Endothelial cell of umbilical vein (primary cell): ENCODE measurements at regions of chr17 and their contacts with region 1.

Region 1: DNA sequence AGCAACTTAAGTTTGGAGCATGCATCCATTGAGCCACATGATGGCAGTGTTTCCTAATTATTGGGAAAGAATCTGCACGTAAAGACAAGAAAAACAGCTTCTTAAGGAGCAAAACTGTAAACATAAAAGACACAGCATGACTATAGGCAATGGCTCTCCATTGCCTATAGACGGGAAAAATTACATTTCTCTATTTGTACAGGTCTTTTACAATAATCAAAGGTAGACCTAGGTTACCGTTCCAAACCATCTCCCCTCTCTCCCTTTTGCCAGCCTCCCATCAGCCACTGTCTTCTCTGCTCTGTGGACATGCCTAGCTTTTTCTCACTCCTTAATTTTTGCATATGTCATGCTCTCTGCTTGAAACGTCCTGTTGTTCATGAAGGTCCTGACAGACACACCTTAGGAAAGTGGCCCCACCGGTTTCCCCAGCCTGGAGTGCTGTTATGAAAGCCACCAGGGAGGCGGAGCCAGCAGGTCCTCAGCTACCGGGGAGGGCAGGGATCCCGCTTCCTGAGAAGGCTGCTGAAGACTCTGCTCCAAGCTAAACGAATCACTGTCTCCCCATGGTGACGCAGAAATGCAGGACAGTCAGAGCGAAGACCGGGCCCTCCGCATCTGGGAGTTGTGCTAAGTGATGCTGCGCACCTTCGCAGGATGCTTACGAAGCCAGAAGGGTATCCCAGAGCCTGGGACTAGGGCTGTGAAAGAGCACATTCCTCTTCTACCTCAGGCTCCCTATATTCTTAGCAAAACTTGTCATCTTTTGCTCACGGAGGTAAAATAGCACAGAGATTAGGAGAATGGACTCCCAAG is 2.2 kb upstream of the SLC16A11 start:
- DNase-seq: peak; percentile 89
- H3K4me3 ChIP-seq: no peak overlapping the region
- H3K27ac ChIP-seq: no peak overlapping the region
- H3K4me1 ChIP-seq: peaks cover 27% of the 10 kb centered on the region
- H3K27me3 ChIP-seq: no peaks in the 10 kb centered on the region
- CTCF ChIP-seq: peak; percentile 52 to 58
- POLR2A ChIP-seq: no peak

Region 2: DNA sequence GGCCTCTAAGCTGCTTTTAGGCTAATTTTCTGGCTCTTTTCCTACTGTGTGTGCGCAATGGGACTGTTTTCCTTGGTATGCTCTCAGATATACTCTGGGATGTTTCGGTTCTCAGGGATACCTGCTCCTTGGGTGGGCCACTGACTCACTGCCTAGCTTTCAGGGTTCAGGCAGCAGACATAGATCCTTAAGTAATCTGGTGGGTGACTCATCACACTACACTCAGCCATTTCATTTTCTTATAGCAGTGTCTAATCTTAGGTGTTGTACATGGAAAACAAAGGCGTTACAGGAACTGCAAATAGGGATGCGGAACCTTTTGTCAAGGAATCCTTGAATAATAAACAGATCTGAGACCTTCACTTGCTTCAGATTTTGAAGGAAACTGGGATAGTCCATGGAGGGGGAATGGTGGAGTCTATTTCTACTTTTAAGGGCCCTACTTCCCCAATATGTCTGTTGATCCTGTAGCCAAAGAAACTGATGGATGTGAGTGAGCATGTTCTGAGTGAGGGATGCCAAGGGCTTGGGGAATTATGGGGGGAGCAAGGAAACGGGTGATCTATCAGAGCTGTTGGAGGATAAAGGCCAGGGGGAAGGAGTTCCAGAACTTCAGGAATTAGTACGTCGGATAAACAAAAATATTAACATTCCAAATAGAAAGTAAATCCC is 173.8 kb before region 1 on chr17:
- CTCF ChIA-PET with region 1: no interaction called
- POLR2A ChIA-PET with region 1: no interaction called
- dilution Hi-C with region 1: no loop called
- intact Hi-C with region 1: no loop called
- DNase-seq: no peak
- H3K4me3 ChIP-seq: no peak overlapping the region
- H3K27ac ChIP-seq: no peak overlapping the region
- H3K4me1 ChIP-seq: no peaks in the 10 kb centered on the region
- H3K27me3 ChIP-seq: peaks cover 6 to 9% of the 10 kb centered on the region in 2 experiments
- CTCF ChIP-seq: no peak
- POLR2A ChIP-seq: no peak

Region 3: GRCh38 chr17:6936370-6937028 is 109.6 kb before region 1 on chr17:
- CTCF ChIA-PET with region 1: no interaction called
- POLR2A ChIA-PET with region 1: no interaction called
- dilution Hi-C with region 1: no loop called
- intact Hi-C with region 1: no loop called
- DNase-seq: peak; percentile 38
- H3K4me3 ChIP-seq: peak overlapping the region; percentile 19 to 50 (median 39)
- H3K27ac ChIP-seq: no peak overlapping the region
- H3K4me1 ChIP-seq: no peaks in the 10 kb centered on the region
- H3K27me3 ChIP-seq: peaks cover 3 to 8% of the 10 kb centered on the region in 2 experiments
- CTCF ChIP-seq: no peak
- POLR2A ChIP-seq: no peak

Region 4: GRCh38 chr17:6953689-6954088 is 92.4 kb before region 1 on chr17:
- CTCF ChIA-PET with region 1: no interaction called
- POLR2A ChIA-PET with region 1: no interaction called
- dilution Hi-C with region 1: no loop called
- intact Hi-C with region 1: no loop called
- DNase-seq: no peak
- H3K4me3 ChIP-seq: no peak overlapping the region
- H3K27ac ChIP-seq: no peak overlapping the region
- H3K4me1 ChIP-seq: no peaks in the 10 kb centered on the region
- H3K27me3 ChIP-seq: peaks cover 5 to 9% of the 10 kb centered on the region in 2 experiments
- CTCF ChIP-seq: no peak
- POLR2A ChIP-seq: no peak

Region 5: DNA sequence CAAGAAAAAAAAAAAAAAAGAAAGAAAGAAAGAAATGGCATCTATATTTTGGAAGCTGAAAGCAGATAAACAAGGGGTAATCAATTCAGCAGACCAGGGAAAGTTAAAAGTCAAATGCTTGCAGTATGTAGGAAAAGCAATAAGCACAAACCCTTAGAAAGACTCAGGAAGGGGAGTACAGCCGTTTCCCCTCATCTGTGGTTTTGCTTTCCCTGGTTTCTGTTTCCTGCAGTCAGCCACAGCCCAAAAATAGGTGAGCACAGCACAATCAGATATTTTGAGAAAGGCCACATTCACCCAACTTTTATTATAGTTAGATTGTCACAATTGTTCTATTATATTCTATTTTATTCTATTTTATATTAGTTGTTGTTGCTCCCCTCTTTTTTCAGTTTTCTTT is 64.7 kb before region 1 on chr17:
- CTCF ChIA-PET with region 1: no interaction called
- POLR2A ChIA-PET with region 1: no interaction called
- dilution Hi-C with region 1: no loop called
- intact Hi-C with region 1: no loop called
- DNase-seq: no peak
- H3K4me3 ChIP-seq: no peak overlapping the region
- H3K27ac ChIP-seq: no peak overlapping the region
- H3K4me1 ChIP-seq: no peaks in the 10 kb centered on the region
- H3K27me3 ChIP-seq: peaks cover 0 to 5% of the 10 kb centered on the region in 2 experiments
- CTCF ChIP-seq: no peak
- POLR2A ChIP-seq: no peak

Region 6: DNA sequence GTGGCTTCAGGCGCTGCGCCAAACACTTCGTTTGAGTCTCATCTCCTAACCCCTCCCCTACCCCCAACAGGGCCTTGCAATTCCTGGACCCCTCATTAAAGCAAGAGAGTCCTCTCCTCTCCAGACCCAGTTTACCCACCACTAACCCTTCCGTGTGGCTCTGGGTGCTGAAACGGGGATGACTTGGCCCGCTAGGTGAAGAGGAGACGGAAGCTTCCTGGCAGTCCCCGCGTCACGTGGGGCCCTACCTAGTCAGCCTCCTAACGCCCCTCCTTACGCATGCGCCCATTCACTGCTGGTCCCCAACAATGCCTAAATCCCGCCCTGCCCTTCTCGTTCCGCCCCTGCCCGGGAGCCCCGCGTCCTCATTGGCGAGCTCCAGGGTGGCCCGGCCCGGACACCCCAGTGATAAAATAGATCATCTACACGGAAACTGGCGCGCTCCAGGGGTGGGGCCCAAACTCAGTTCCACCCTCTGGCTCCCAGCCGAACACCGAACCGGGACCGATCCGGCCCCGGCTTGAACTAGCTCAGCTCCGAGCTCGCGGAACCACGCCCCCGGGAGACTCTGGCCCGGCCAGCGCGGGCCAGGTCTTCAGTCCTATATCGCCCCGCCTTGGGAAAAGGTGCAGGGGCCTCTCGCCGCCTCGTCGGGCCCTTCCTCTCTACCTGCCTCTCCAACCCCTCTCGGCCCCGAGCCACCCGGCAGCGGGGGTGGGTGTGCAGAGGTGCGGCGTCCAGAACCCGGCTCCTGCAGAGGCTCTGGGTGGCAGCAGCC is 10.3 kb before region 1 on chr17 and contains the start of gene SLC16A13:
- CTCF ChIA-PET with region 1: interaction called, 11 read pairs
- POLR2A ChIA-PET with region 1: interaction called, 4 read pairs
- dilution Hi-C with region 1: no loop called
- intact Hi-C with region 1: no loop called
- DNase-seq: peak; percentile 96
- H3K4me3 ChIP-seq: peak within 1 kb of the TSS; percentile 55 to 76 (median 61)
- H3K27ac ChIP-seq: peak within 1 kb of the TSS; percentile 84
- H3K4me1 ChIP-seq: peaks cover 31% of the 10 kb centered on the region
- H3K27me3 ChIP-seq: no peaks in the 10 kb centered on the region
- CTCF ChIP-seq: no peak
- POLR2A ChIP-seq: no peak
- total RNA-seq, gene SLC16A13: 18.6 and 24.7 TPM in 2 replicates

Region 7: GRCh38 chr17:7141824-7142223 is 95.7 kb after region 1 on chr17:
- CTCF ChIA-PET with region 1: interaction called, 223 read pairs
- POLR2A ChIA-PET with region 1: interaction called, 6 read pairs
- dilution Hi-C with region 1: no loop called
- intact Hi-C with region 1: no loop called
- DNase-seq: no peak
- H3K4me3 ChIP-seq: no peak overlapping the region
- H3K27ac ChIP-seq: no peak overlapping the region
- H3K4me1 ChIP-seq: peaks cover 4% of the 10 kb centered on the region
- H3K27me3 ChIP-seq: peaks cover 0 to 6% of the 10 kb centered on the region in 2 experiments
- CTCF ChIP-seq: no peak
- POLR2A ChIP-seq: no peak

Region 8: DNA sequence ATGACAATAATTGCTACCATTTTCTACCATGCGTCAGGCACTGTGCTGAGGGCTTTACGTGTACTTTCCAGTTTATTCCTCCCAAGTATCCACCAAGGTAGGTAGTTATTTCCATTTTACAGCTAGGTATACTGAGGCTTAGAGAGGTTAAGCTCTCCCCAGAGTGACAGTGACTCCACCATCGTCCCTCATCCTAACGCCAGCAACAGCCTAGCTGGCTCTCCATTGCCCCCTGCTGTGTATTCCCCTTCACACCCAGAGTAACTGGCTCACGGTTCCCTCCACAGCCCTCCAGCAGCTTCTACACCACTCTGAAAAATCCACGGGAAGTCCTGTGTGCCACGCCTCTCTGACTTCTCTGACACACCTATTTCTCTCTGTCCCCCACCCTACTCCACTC is 140.1 kb after region 1 on chr17:
- CTCF ChIA-PET with region 1: interaction called, 19 read pairs
- POLR2A ChIA-PET with region 1: no interaction called
- dilution Hi-C with region 1: no loop called
- intact Hi-C with region 1: no loop called
- DNase-seq: no peak
- H3K4me3 ChIP-seq: no peak overlapping the region
- H3K27ac ChIP-seq: no peak overlapping the region
- H3K4me1 ChIP-seq: no peaks in the 10 kb centered on the region
- H3K27me3 ChIP-seq: no peaks in the 10 kb centered on the region
- CTCF ChIP-seq: peak; percentile 12 to 33
- POLR2A ChIP-seq: no peak

Region 9: GRCh38 chr17:7296189-7296902 is 250.2 kb after region 1 on chr17:
- CTCF ChIA-PET with region 1: interaction called, 74 read pairs
- POLR2A ChIA-PET with region 1: no interaction called
- dilution Hi-C with region 1: no loop called
- intact Hi-C with region 1: loop called (anchors 1 kb)
- DNase-seq: peak; percentile 74
- H3K4me3 ChIP-seq: no peak overlapping the region
- H3K27ac ChIP-seq: no peak overlapping the region
- H3K4me1 ChIP-seq: peaks cover 8% of the 10 kb centered on the region
- H3K27me3 ChIP-seq: peaks cover 16 to 26% of the 10 kb centered on the region in 2 experiments
- CTCF ChIP-seq: peak; percentile 88 to 97
- POLR2A ChIP-seq: no peak